ENCODE measurements at regions of chr15 and their contacts with region 1.

Region 1: DNA sequence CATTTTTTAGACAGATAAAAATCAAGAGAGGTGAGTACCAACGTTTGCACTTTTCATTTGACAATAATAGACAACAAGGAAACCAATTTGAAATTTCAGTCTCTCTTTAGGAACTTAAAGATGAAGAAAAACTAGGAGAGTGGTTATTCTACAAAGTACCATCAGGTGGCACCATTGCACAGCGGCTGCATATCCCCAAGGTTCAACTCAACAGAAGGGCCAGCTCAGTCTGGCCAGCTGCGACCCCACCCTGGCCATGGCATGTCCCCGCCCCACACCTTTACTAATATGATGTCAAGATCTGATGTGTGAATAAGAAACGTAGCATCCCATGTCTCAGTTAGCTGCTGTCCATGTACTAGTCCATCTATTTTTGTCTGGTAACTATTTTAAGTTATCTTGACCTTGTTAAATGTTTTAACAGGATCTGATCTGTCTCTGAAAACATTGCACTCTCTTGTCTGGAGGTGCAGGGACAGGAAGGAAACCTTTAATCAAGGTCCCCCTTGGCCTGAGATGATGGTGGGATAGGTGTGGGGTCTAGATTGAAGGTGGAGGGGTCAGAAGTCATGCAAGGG is 35.5 kb upstream of the CGNL1 start:
- DNase-seq: peak in 3 of 9 donors; percentile 23 to 25 (median 23)
- ATAC-seq: peak; percentile 48
- H3K4me3 ChIP-seq: no peak overlapping the region
- H3K4me3 Mint-ChIP-seq: no peak overlapping the region
- H3K27ac ChIP-seq: no peak overlapping the region
- H3K27ac Mint-ChIP-seq: no peak overlapping the region
- H3K4me1 ChIP-seq: no peaks in the 10 kb centered on the region
- H3K4me1 Mint-ChIP-seq: no peaks in the 10 kb centered on the region
- H3K27me3 ChIP-seq: no peaks in the 10 kb centered on the region
- H3K27me3 Mint-ChIP-seq: peaks cover 0 to 16% (median 4%) of the 10 kb centered on the region in 5 donors

Region 2: DNA sequence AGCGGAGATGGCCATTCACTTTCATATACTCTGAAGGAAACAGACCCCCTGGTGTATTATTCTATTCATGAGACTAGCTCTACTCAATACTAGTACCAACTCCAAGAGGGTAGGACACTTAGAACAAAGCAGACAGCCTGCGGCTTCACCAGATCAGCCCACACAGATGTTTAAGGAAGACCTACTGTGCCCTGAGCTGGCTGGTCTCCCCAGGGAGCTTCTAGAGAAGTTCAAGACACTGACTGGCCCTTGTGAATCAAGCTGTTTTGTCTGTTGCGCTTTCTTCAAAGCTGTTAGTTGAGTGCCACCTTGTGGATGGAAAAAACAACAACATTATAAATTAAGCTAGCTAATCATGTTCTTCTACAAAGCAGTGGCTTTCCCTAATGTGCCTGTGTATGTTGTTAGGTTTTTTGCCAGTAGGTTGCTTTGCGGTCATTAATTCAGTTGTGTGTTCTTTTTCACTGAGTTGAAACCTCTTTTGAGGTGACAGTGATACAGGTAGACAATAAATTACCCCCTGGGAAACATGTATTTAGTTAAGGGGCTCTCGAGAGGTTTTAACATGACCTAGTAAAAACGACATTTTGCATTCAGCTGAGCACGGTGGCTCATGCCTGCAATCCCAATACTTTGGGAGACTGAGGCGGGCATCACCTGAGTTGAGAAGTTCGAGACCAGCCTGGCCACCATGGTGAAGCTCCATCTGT is 186.8 kb after region 1 on chr15:
- CTCF ChIA-PET with region 1: interaction called, 27 read pairs
- POLR2A ChIA-PET with region 1: no interaction called
- intact Hi-C with region 1: loop called in 1 of 2 experiments (anchors 1 kb)
- DNase-seq: peak in 7 of 9 donors; percentile 20 to 52 (median 41)
- ATAC-seq: no peak
- H3K4me3 ChIP-seq: no peak overlapping the region
- H3K4me3 Mint-ChIP-seq: no peak overlapping the region
- H3K27ac ChIP-seq: no peak overlapping the region
- H3K27ac Mint-ChIP-seq: no peak overlapping the region
- H3K4me1 ChIP-seq: no peaks in the 10 kb centered on the region
- H3K4me1 Mint-ChIP-seq: no peaks in the 10 kb centered on the region
- H3K27me3 ChIP-seq: no peaks in the 10 kb centered on the region
- H3K27me3 Mint-ChIP-seq: peaks cover 4 to 24% (median 9%) of the 10 kb centered on the region in 5 donors

Region 3: DNA sequence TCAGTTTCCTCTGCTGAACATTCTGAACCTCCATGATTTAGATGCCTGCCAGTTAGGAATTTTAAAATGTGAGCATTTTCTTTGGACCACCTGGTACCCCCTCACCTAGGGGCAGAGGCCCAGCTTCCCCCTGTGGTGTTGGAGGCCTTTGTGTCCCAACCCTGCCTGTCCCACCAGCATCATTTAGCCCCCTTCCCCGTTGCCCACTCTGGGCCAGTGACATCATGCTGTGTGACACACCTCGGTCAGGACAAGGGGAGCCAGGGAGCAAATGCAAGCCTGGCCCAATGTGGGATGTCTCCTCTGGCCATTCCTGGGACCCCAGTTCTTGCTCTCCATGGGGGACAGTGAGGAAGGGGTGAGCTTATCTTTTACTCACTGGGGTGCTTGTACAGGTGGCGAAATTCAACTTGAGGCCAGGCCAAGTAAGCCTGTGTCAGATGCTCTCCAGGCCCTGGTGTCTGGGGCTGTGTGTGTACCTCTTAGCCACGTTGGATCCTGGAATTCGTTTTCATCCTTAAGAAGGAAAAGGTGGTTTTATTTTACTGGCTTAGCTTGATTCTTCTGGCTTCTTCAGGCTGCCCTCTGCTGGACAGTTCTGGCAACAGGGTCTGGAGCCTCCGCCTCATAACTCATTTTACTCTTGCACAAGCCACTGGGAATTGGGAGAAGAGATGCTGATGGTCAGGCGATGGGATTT is 201.2 kb after region 1 on chr15:
- CTCF ChIA-PET with region 1: no interaction called
- POLR2A ChIA-PET with region 1: no interaction called
- intact Hi-C with region 1: loop called in 1 of 2 experiments (anchors 1 kb)
- DNase-seq: no peak
- ATAC-seq: no peak
- H3K4me3 ChIP-seq: no peak overlapping the region
- H3K4me3 Mint-ChIP-seq: no peak overlapping the region
- H3K27ac ChIP-seq: no peak overlapping the region
- H3K27ac Mint-ChIP-seq: no peak overlapping the region
- H3K4me1 ChIP-seq: no peaks in the 10 kb centered on the region
- H3K4me1 Mint-ChIP-seq: no peaks in the 10 kb centered on the region
- H3K27me3 ChIP-seq: no peaks in the 10 kb centered on the region
- H3K27me3 Mint-ChIP-seq: peaks cover 3 to 15% (median 7%) of the 10 kb centered on the region in 5 donors